ENCODE measurements at regions of chr7 and their contacts with region 1.

Region 1: GRCh38 chr7:43906331-43907010 is at the start of gene URGCP:
- DNase-seq: peak; percentile 64
- ATAC-seq: peak; percentile 90
- H3K4me3 Mint-ChIP-seq: peak within 1 kb of the TSS; percentile 94
- H3K27ac Mint-ChIP-seq: peak within 1 kb of the TSS; percentile 92
- H3K4me1 Mint-ChIP-seq: peaks cover 22% of the 10 kb centered on the region
- H3K27me3 Mint-ChIP-seq: no peaks in the 10 kb centered on the region
- CTCF ChIP-seq: no peak
- total RNA-seq, gene URGCP: 21.6 and 23.3 TPM in 2 replicates

Region 2: GRCh38 chr7:43869006-43869866 is 37.2 kb before region 1 on chr7 and contains the start of gene MRPS24:
- CTCF ChIA-PET with region 1: no interaction called
- POLR2A ChIA-PET with region 1: interaction called, 5 read pairs
- intact Hi-C with region 1: loop called (anchors 5 kb)
- DNase-seq: peak; percentile 85
- ATAC-seq: peak; percentile 98
- H3K4me3 Mint-ChIP-seq: peak within 1 kb of the TSS; percentile 93
- H3K27ac Mint-ChIP-seq: peak within 1 kb of the TSS; percentile 89
- H3K4me1 Mint-ChIP-seq: peaks cover 21% of the 10 kb centered on the region
- H3K27me3 Mint-ChIP-seq: no peaks in the 10 kb centered on the region
- CTCF ChIP-seq: no peak
- total RNA-seq, gene MRPS24: 73.1 and 78.1 TPM in 2 replicates

Measured in activated B cell treated with CpG ODN at 0.5 μM for 24 hours (primary cell).